ENCODE measurements at regions of chr11 and their contacts with region 1.

Region 1: GRCh38 chr11:31397239-31397834 is 27.7 kb downstream of the DNAJC24 start:
- DNase-seq: no peak
- H3K4me3 Mint-ChIP-seq: no peak overlapping the region
- H3K27ac Mint-ChIP-seq: no peak overlapping the region
- H3K4me1 Mint-ChIP-seq: no peaks in the 10 kb centered on the region
- H3K27me3 Mint-ChIP-seq: no peaks in the 10 kb centered on the region

Region 2: DNA sequence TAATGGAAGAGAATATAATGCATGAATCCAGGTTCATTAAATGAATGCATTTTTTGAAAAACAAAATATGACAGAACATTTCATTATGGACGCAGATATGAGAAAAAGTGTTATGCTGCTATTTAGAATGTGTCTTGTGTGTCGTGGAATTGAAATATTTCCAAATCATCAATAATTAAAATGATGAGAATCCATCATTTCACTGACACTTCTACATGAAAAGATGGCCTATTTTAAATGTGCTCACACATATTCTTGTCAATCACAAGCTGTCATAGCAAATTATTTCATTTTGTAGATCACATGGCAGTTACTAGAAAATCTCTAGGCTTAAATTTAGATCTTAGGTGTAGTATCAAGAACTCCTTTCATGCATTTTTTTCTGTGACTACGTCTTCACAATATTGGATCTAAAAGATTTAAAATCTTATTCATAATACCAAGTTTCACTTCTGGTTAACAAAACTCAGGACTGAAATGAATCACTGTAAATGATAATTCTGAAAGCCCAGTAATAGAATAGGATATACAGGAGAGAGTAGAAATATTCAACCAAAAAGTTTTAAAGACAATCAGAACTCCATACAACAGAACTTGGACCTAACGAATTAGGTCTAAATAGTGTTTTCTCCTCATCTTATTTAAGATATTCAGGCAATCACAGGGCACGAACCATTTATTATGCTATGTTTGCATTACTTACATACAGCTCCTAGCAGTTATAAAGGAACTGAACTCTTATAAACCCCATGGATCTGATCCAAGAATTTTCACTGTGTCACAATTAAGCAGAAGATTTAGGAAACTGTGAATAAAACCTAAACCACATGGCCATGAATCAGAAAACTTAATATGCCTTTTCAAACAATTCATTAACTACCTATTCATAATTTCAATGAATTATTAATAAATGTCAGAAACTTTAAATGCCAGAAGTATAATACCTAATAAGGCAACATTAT is 95.5 kb before region 1 on chr11:
- intact Hi-C with region 1: no loop called
- DNase-seq: no peak
- H3K4me3 Mint-ChIP-seq: no peak overlapping the region
- H3K27ac Mint-ChIP-seq: no peak overlapping the region
- H3K4me1 Mint-ChIP-seq: no peaks in the 10 kb centered on the region
- H3K27me3 Mint-ChIP-seq: no peaks in the 10 kb centered on the region

Region 3: DNA sequence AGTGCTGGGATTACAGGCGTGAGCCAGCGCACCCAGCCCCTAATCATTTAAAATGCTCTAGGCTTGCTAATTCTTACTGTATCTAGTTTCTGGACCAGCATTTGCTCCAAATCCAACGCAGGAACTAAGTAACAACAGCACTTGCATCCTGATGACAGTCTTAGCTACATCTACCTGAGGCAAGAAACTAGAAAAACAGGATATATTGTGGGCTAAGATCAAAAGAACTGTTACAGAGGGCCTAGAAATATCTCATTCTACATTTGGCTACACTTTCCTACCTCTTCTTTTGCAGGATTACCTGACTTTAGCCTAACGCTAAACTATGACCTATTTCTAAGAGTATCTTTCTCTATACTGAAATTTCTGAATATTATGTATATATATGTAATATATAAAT is 35.6 kb before region 1 on chr11:
- intact Hi-C with region 1: no loop called
- DNase-seq: no peak
- H3K4me3 Mint-ChIP-seq: no peak overlapping the region
- H3K27ac Mint-ChIP-seq: no peak overlapping the region
- H3K4me1 Mint-ChIP-seq: peaks cover 7% of the 10 kb centered on the region
- H3K27me3 Mint-ChIP-seq: peaks cover 17% of the 10 kb centered on the region

Region 4: GRCh38 chr11:31798554-31799434 is 401.5 kb after region 1 on chr11:
- intact Hi-C with region 1: loop called (anchors 5 kb)
- DNase-seq: no peak
- H3K4me3 Mint-ChIP-seq: no peak overlapping the region
- H3K27ac Mint-ChIP-seq: no peak overlapping the region
- H3K4me1 Mint-ChIP-seq: peaks cover 6% of the 10 kb centered on the region
- H3K27me3 Mint-ChIP-seq: peaks cover 79% of the 10 kb centered on the region

Region 5: DNA sequence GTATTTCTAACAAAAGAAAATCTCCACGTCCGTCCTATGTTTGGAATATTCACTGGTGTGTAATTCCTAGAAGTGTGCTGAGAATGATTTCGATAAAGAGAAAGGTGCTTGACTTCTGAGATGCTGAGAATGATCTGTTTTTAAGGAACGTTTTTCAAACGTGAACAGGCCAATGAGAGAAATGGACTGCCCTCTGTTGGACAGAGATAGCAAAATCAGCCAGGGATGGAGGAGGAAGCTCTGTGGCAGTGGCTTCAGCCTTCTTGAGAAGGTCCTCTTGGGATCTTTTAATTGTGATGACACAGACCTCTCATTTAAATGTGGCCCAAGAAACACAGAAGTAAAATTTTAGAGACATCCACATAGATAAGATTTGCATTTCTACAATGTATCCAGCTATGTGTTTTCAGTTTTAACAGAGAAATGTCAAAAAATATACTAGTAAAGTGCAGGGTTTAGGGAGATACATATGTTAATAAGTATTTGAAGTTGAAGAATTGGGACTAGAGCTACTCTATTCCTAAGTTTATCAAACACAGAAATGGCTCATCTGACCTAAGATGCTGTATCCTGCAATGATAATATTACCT is 609.6 kb after region 1 on chr11:
- intact Hi-C with region 1: loop called (anchors 5 kb)
- DNase-seq: no peak
- H3K4me3 Mint-ChIP-seq: no peak overlapping the region
- H3K27ac Mint-ChIP-seq: no peak overlapping the region
- H3K4me1 Mint-ChIP-seq: no peaks in the 10 kb centered on the region
- H3K27me3 Mint-ChIP-seq: peaks cover 8% of the 10 kb centered on the region

Region 6: GRCh38 chr11:32176223-32176934 is 779.0 kb after region 1 on chr11:
- intact Hi-C with region 1: loop called (anchors 10 kb)
- DNase-seq: peak; percentile 62
- H3K4me3 Mint-ChIP-seq: no peak overlapping the region
- H3K27ac Mint-ChIP-seq: no peak overlapping the region
- H3K4me1 Mint-ChIP-seq: no peaks in the 10 kb centered on the region
- H3K27me3 Mint-ChIP-seq: peaks cover 19% of the 10 kb centered on the region